ENCODE measurements at regions of chr5 and their contacts with region 1.

Region 1: GRCh38 chr5:520196-520849 is 3.9 kb downstream of the SLC9A3 start:
- DNase-seq: no peak
- ATAC-seq: no peak
- H3K4me3 ChIP-seq: no peak overlapping the region
- H3K4me3 Mint-ChIP-seq: no peak overlapping the region
- H3K27ac ChIP-seq: no peak overlapping the region
- H3K27ac Mint-ChIP-seq: peak overlapping the region; percentile 7
- H3K4me1 ChIP-seq: peaks cover 10 to 21% of the 10 kb centered on the region in 2 donors
- H3K4me1 Mint-ChIP-seq: peaks cover 12% of the 10 kb centered on the region
- H3K27me3 ChIP-seq: peaks cover 0 to 86% (median 36%) of the 10 kb centered on the region in 4 experiments
- H3K27me3 Mint-ChIP-seq: peaks cover 53% of the 10 kb centered on the region
- CTCF ChIP-seq: no peak

Region 2: GRCh38 chr5:496028-496427 is 24.3 kb before region 1 on chr5:
- CTCF ChIA-PET with region 1: no interaction called
- POLR2A ChIA-PET with region 1: interaction called, 12 read pairs
- intact Hi-C with region 1: no loop called
- DNase-seq: no peak
- ATAC-seq: no peak
- H3K4me3 ChIP-seq: no peak overlapping the region
- H3K4me3 Mint-ChIP-seq: no peak overlapping the region
- H3K27ac ChIP-seq: no peak overlapping the region
- H3K27ac Mint-ChIP-seq: no peak overlapping the region
- H3K4me1 ChIP-seq: no peaks in the 10 kb centered on the region
- H3K4me1 Mint-ChIP-seq: no peaks in the 10 kb centered on the region
- H3K27me3 ChIP-seq: peaks cover 0 to 40% (median 5%) of the 10 kb centered on the region in 4 experiments
- H3K27me3 Mint-ChIP-seq: peaks cover 21% of the 10 kb centered on the region
- CTCF ChIP-seq: no peak

Measured in B cell (primary cell).